ENCODE measurements at regions of chr18 and their contacts with region 1.

Region 1: DNA sequence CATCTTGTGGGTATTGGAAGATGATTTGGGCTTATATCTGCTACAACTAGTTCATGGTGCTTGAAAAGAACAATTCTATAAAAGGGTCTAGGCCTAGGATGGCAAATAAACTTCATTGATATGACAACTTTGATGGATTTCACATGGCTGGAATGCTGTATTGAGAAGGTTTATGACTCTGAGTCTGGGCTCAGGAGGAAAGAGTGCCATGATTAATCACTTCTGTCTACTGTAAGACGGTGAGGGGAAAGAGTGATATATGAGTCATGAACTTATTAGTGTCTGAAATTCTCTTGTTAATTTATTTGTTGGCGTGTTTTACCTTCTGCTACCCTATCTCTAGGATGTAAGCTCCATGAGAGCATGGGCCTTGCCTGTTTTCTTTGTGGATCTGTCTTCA is 17.0 kb upstream of the ADCYAP1 start:
- DNase-seq: no peak
- ATAC-seq: no peak
- H3K4me3 ChIP-seq: no peak overlapping the region
- H3K27ac ChIP-seq: no peak overlapping the region
- H3K4me1 ChIP-seq: no peaks in the 10 kb centered on the region
- H3K27me3 ChIP-seq: no peaks in the 10 kb centered on the region

Region 2: DNA sequence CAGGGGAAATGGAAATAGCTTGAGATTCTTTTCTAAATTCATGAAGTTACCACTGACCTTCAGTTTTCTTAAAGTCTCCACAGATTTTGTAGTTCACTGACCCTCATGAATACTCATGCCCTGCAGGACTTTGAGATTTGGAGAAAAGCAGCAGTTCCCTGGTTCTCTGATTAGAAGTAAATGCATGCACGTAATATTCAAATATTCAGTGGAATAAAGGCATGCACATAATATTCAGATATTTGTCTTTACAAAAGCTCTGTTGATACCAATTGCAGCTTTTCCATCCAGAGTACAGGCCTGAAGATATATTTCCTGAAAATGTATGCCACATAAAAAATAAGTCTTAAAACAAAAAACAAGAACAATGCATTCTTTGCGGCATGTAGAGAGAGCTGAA is 236.8 kb after region 1 on chr18:
- intact Hi-C with region 1: loop called in 1 of 2 experiments (anchors 5 kb)
- DNase-seq: no peak
- ATAC-seq: no peak
- H3K4me3 ChIP-seq: no peak overlapping the region
- H3K27ac ChIP-seq: no peak overlapping the region
- H3K4me1 ChIP-seq: no peaks in the 10 kb centered on the region
- H3K27me3 ChIP-seq: no peaks in the 10 kb centered on the region